HEK293 (cell line): ENCODE measurements at regions of chr12 and their contacts with region 1.

Region 1: DNA sequence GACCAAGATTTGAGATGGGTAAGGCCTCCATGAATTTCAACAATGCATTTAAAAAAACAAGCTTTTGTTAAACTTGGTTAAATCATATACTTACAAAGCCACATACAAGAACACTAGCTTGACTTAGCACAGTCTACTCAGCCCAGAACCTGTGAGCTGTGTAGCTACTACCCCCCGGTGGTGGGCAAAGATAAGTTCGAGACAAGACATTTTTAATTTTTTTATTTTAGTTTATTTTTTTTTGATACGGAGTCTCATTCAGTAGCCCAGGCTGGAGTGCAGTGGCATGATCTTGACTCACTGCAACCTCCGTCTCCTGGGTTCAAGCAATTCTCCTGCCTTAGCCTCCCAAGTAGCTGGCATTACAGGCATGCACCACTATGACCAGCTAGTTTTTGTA is 3.7 kb upstream of the NECAP1 start:
- H3K4me3 ChIP-seq: no peak overlapping the region
- H3K27ac ChIP-seq: no peak overlapping the region
- H3K4me1 ChIP-seq: peaks cover 14% of the 10 kb centered on the region
- CTCF ChIP-seq: peak; percentile 69

Region 2: DNA sequence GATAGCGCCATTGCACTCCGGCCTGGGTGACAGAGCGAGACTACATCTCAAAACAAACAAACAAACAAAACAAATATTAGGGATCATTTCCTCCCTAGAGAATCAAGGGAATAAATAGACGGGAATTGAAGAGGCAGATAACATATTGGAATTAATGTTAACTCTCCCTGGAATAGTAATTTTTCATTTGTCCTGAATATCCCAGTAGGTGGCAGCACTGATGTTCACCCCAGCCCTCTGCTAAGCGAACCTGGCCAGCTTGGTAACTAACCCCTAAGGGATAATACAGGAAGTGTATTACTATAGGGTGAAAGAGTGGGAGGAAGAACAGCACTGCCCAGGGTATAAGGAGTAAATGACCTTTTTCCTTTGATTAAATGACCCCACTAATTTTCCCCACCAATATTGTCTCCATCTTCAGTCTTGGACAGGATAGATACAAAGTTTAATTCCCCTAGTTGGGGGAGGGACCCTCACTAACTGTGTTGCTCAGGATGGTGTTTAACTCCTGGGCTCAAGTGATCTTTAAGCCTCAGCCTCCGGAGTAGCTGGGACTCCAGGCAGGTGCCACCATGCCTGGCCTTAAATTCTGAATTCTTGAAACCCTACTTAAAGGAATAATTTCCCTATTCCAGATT is 246.2 kb before region 1 on chr12:
- CTCF ChIA-PET with region 1: interaction called, 16 read pairs
- POLR2A ChIA-PET with region 1: no interaction called
- H3K4me3 ChIP-seq: no peak overlapping the region
- H3K27ac ChIP-seq: no peak overlapping the region
- H3K4me1 ChIP-seq: no peaks in the 10 kb centered on the region
- CTCF ChIP-seq: no peak

Region 3: GRCh38 chr12:7859552-7859951 is 218.8 kb before region 1 on chr12:
- CTCF ChIA-PET with region 1: interaction called, 11 read pairs
- POLR2A ChIA-PET with region 1: no interaction called
- H3K4me3 ChIP-seq: no peak overlapping the region
- H3K27ac ChIP-seq: no peak overlapping the region
- H3K4me1 ChIP-seq: no peaks in the 10 kb centered on the region
- CTCF ChIP-seq: no peak

Region 4: GRCh38 chr12:8038659-8039114 is 39.7 kb before region 1 on chr12:
- CTCF ChIA-PET with region 1: interaction called, 92 read pairs
- POLR2A ChIA-PET with region 1: no interaction called
- H3K4me3 ChIP-seq: peak overlapping the region; percentile 18
- H3K27ac ChIP-seq: no peak overlapping the region; the same call in 1 of the 2 replicates
- H3K4me1 ChIP-seq: peaks cover 11% of the 10 kb centered on the region
- CTCF ChIP-seq: no peak

Region 5: GRCh38 chr12:8045952-8046944 is 32.1 kb before region 1 on chr12:
- CTCF ChIA-PET with region 1: interaction called, 92 read pairs
- POLR2A ChIA-PET with region 1: no interaction called
- H3K4me3 ChIP-seq: no peak overlapping the region
- H3K27ac ChIP-seq: no peak overlapping the region
- H3K4me1 ChIP-seq: no peaks in the 10 kb centered on the region
- CTCF ChIP-seq: peak; percentile 33; the same call in 1 of the 2 replicates

Region 6: DNA sequence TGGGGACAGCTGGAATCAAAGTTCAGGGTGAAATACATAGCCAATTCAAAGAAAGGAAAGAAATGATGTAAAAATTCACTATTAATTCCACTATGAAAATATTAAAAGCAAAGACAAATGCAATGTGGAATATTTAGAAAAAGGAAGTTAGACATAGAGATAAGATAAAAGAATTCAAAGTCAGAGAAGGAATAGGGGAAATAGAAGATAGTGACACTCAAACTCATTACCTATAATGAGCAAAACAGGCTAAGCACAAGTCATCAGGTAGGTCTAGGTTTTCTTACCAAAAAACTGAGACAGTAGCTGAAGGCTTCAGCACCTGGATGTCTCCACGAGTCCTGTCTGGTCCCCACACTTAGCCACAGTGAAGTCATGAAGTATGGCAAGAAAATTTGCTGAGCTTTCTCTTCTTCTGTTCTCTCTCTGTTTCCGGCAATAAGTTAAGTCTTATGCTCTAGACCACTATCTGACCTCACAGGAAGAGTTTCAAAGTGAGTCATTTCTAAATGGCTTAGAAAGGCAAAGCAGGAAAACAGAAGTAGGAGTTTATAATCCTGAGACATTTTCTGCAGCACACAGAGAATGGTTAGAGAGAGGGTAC is 12.3 kb before region 1 on chr12 and contains the start of gene C3AR1:
- CTCF ChIA-PET with region 1: interaction called, 15 read pairs
- POLR2A ChIA-PET with region 1: interaction called, 3 read pairs
- H3K4me3 ChIP-seq: no peak within 1 kb of the TSS
- H3K27ac ChIP-seq: no peak within 1 kb of the TSS
- H3K4me1 ChIP-seq: no peaks in the 10 kb centered on the region
- CTCF ChIP-seq: no peak